ENCODE measurements at regions of chr16 and their contacts with region 1.

Region 1: DNA sequence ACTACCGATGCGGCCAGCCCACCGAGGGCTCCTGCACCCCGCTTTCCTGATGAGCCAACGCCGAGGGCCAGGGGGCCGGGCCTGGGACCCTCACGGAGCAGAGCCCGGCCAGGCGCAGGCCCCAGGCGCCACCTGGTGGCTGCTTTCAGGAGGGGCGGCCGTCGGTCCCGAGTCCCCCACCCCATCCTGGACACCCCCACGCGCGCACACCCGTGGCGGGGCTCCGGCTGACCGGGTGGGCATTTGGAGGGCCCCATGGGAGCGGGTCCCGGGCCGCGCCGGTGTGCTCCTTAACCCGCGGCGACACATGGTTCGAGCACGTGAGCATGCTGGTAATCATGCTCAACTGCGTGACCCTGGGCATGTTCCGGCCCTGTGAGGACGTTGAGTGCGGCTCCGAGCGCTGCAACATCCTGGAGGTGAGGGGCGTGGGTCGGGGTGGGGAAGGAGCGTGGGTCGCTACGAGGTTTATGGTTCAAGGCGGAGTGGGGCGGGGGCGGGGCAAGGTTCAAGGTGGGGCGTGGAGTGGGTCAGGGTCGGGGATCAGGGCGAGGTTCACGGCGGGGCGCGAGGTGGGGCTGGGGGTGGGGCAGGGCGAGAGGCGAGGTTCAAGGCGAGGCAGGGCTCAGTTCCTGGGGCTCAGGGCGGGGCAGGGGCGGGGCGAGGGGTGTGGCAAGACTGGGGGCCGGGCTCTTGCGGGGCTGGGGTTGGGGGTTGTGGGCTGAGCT is 30.2 kb downstream of the TPSG1 start:
- DNase-seq: no peak
- H3K4me3 ChIP-seq: no peak overlapping the region
- H3K27ac ChIP-seq: no peak overlapping the region
- H3K27me3 ChIP-seq: no peaks in the 10 kb centered on the region
- CTCF ChIP-seq: peak; percentile 72

Region 2: DNA sequence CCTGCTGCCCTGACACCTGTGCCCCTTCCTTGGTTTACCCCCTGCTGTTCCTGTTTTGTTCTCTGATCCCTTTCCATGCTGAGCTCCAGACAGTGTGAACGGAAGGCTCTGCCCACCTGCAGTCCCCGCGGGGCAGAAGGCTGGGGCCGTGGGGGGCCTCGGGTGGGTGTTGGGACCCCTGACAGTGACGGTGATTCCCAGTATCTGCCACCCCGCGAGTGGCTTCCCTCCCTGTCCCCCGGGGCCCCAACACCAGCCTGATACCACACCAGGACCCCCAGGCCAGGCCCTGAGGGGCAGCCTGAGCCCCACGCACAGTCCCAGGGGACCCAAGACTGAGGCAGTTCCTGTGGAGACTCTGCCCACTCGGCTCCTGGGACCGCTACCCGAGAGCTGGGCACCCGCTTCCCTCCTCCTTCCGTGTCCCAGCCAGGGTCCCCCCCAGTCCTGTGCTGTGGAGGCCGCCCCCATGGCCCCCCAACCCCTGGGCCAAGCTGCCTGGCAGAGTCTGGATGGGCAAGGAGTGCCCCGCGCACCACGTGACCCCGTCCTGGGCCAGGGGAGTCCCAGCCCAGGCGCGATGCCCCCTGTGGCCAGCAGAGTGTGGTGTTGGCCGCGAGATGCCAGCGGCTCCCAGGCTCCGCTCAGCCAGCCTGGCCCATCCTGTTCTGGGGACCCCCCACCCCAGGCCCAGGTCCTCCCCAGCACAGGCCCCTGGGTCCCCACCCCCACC is 88.8 kb before region 1 on chr16:
- CTCF ChIA-PET with region 1: interaction called, 13 read pairs
- POLR2A ChIA-PET with region 1: no interaction called
- DNase-seq: peak; percentile 10
- H3K4me3 ChIP-seq: no peak overlapping the region
- H3K27ac ChIP-seq: no peak overlapping the region
- H3K27me3 ChIP-seq: peaks cover 32% of the 10 kb centered on the region
- CTCF ChIP-seq: peak; percentile 83

Measured in AG04450 (cell line).